MCF 10A (cell line): ENCODE measurements at regions of chr4 and their contacts with region 1.

Region 1: GRCh38 chr4:83334425-83335241 is at the start of gene HPSE:
- DNase-seq: peak; percentile 92
- H3K4me3 Mint-ChIP-seq: peak within 1 kb of the TSS; percentile 81
- H3K27ac Mint-ChIP-seq: peak within 1 kb of the TSS; percentile 47
- H3K4me1 Mint-ChIP-seq: peaks cover 15% of the 10 kb centered on the region
- H3K27me3 Mint-ChIP-seq: no peaks in the 10 kb centered on the region
- CTCF ChIP-seq: no peak
- total RNA-seq, gene HPSE: 5.5 and 6.0 TPM in 2 replicates

Region 2: GRCh38 chr4:83356899-83357661 is 22.4 kb after region 1 on chr4:
- CTCF ChIA-PET with region 1: interaction called, 5 read pairs
- POLR2A ChIA-PET with region 1: interaction called, 48 read pairs
- intact Hi-C with region 1: loop called (anchors 1 kb)
- DNase-seq: peak; percentile 90
- H3K4me3 Mint-ChIP-seq: peak overlapping the region; percentile 35
- H3K27ac Mint-ChIP-seq: peak overlapping the region; percentile 96
- H3K4me1 Mint-ChIP-seq: no peaks in the 10 kb centered on the region
- H3K27me3 Mint-ChIP-seq: no peaks in the 10 kb centered on the region
- CTCF ChIP-seq: no peak

Region 3: GRCh38 chr4:83599183-83599582 is 264.6 kb after region 1 on chr4:
- CTCF ChIA-PET with region 1: no interaction called
- POLR2A ChIA-PET with region 1: no interaction called
- intact Hi-C with region 1: no loop called
- DNase-seq: peak; percentile 46
- H3K4me3 Mint-ChIP-seq: no peak overlapping the region
- H3K27ac Mint-ChIP-seq: no peak overlapping the region
- H3K4me1 Mint-ChIP-seq: no peaks in the 10 kb centered on the region
- H3K27me3 Mint-ChIP-seq: no peaks in the 10 kb centered on the region
- CTCF ChIP-seq: no peak